Posterior vena cava (tissue), 2 donors: ENCODE measurements at regions of chr2 and their contacts with region 1.

Region 1: GRCh38 chr2:86541334-86541733 is 21.9 kb downstream of the CHMP3 start:
- DNase-seq: no peak

Region 2: GRCh38 chr2:86556198-86556899 is 15.0 kb after region 1 on chr2:
- intact Hi-C with region 1: loop called in 1 of 2 experiments (anchors 2 kb)
- DNase-seq: no peak